ENCODE measurements at regions of chr19 and their contacts with region 1.

Region 1: DNA sequence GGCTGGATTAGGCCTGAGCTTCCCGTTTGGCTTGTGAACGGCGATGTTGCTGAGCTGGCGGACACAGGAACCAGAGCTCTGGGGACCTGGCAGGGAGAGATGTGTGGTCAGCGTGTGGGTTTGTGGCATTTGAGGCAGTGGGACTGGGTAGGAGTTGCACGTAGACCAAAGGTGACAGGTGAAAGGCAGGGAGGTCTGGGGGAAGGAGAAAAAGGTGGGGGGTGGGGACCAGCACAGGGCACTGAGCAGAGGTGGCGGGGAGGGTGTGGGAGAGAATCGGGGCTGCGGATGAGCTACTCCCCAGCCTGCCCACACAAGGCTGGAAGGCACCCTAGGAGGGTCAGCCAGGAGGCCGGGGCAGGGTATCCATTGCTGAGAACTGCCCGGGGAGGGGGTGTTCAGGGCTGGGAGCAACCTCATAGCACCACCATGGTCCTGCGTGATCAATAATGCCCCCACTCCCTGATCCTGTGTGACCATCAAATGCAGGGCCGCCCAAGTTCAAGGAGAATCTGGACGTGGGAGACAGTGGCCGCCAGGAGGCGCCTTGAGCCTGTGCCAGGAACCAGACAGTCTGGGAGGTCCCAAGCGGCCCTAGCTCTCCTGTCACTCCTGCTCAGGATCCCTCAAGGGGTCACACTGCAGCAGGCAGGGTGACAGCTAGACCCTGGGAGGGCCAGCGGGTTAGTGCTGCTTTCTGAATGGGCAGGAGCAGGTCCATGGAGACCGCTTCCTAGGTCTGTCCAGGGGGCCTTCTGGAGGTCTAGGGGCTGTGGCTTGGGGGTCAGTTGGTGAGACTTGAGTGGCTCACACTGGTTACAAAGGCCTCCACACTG is 12.8 kb upstream of the SELENOW start:
- DNase-seq: peak; percentile 81
- H3K4me3 ChIP-seq: no peak overlapping the region
- H3K27ac ChIP-seq: no peak overlapping the region
- H3K4me1 ChIP-seq: peaks cover 0 to 7% (median 3%) of the 10 kb centered on the region in 4 donors
- H3K27me3 ChIP-seq: no peaks in the 10 kb centered on the region
- CTCF ChIP-seq: peak; percentile 73 to 85 (median 78)
- EP300 ChIP-seq: no peak
- POLR2A ChIP-seq: no peak

Region 2: GRCh38 chr19:47790398-47790814 is 24.7 kb after region 1 on chr19:
- intact Hi-C with region 1: loop called (anchors 1 kb)
- DNase-seq: peak; percentile 89
- H3K4me3 ChIP-seq: no peak overlapping the region
- H3K27ac ChIP-seq: no peak overlapping the region
- H3K4me1 ChIP-seq: peaks cover 0 to 15% (median 9%) of the 10 kb centered on the region in 4 donors
- H3K27me3 ChIP-seq: no peaks in the 10 kb centered on the region
- CTCF ChIP-seq: peak; percentile 58 to 91 (median 74)
- EP300 ChIP-seq: no peak
- POLR2A ChIP-seq: no peak

Region 3: DNA sequence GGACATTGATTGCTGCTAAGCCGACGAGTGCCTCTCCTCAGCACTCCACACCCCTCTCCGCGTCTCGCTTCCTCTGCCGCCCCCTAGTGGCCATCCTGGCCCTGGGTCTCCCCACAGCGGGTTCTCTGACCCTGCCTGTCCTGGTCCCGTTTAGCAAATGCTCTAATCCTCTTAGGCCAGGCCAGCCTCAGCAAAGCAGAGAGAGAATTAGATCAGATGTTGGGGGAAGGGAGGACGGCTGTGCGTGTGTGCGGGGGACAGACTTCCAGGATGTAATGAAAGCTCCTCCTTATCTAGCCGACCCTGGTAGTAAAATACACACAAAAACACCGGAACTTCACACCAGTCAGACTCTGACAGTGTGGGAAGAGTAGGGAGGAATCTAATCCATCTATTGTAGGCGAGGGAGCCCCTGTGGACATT is 97.8 kb after region 1 on chr19:
- intact Hi-C with region 1: loop called (anchors 5 kb)
- DNase-seq: peak; percentile 87
- H3K4me3 ChIP-seq: no peak overlapping the region
- H3K27ac ChIP-seq: no peak overlapping the region
- H3K4me1 ChIP-seq: no peaks in the 10 kb centered on the region
- H3K27me3 ChIP-seq: peaks cover 0 to 17% (median 0%) of the 10 kb centered on the region in 3 donors
- CTCF ChIP-seq: peak; percentile 49 to 92 (median 70)
- EP300 ChIP-seq: no peak
- POLR2A ChIP-seq: no peak